Mammary epithelial cell (primary cell): ENCODE measurements at regions of chr20 and their contacts with region 1.

Region 1: GRCh38 chr20:52242237-52243230 is 51.0 kb upstream of the ZFP64 start:
- DNase-seq: no peak
- H3K4me3 ChIP-seq: no peak overlapping the region
- H3K27ac ChIP-seq: no peak overlapping the region
- H3K4me1 ChIP-seq: no peaks in the 10 kb centered on the region
- H3K27me3 ChIP-seq: no peaks in the 10 kb centered on the region
- CTCF ChIP-seq: peak; percentile 47 to 55

Region 2: GRCh38 chr20:52012079-52012478 is 230.5 kb before region 1 on chr20:
- CTCF ChIA-PET with region 1: no interaction called
- dilution Hi-C with region 1: no loop called
- in situ Hi-C with region 1: no loop called
- intact Hi-C with region 1: no loop called
- DNase-seq: no peak
- H3K4me3 ChIP-seq: no peak overlapping the region
- H3K27ac ChIP-seq: no peak overlapping the region
- H3K4me1 ChIP-seq: no peaks in the 10 kb centered on the region
- H3K27me3 ChIP-seq: no peaks in the 10 kb centered on the region
- CTCF ChIP-seq: no peak

Region 3: GRCh38 chr20:52150440-52151258 is 91.9 kb before region 1 on chr20:
- CTCF ChIA-PET with region 1: no interaction called
- dilution Hi-C with region 1: no loop called
- in situ Hi-C with region 1: no loop called
- intact Hi-C with region 1: no loop called
- DNase-seq: peak; percentile 26
- H3K4me3 ChIP-seq: no peak overlapping the region
- H3K27ac ChIP-seq: no peak overlapping the region
- H3K4me1 ChIP-seq: no peaks in the 10 kb centered on the region
- H3K27me3 ChIP-seq: no peaks in the 10 kb centered on the region
- CTCF ChIP-seq: peak; percentile 82 to 89

Region 4: GRCh38 chr20:52305858-52306257 is 63.3 kb after region 1 on chr20:
- CTCF ChIA-PET with region 1: no interaction called
- dilution Hi-C with region 1: no loop called
- in situ Hi-C with region 1: no loop called
- intact Hi-C with region 1: no loop called
- DNase-seq: no peak
- H3K4me3 ChIP-seq: no peak overlapping the region
- H3K27ac ChIP-seq: no peak overlapping the region
- H3K4me1 ChIP-seq: no peaks in the 10 kb centered on the region
- H3K27me3 ChIP-seq: no peaks in the 10 kb centered on the region
- CTCF ChIP-seq: no peak

Region 5: GRCh38 chr20:52379723-52380336 is 137.3 kb after region 1 on chr20:
- CTCF ChIA-PET with region 1: no interaction called
- dilution Hi-C with region 1: no loop called
- in situ Hi-C with region 1: no loop called
- intact Hi-C with region 1: loop called (anchors 10 kb)
- DNase-seq: no peak
- H3K4me3 ChIP-seq: no peak overlapping the region
- H3K27ac ChIP-seq: no peak overlapping the region
- H3K4me1 ChIP-seq: no peaks in the 10 kb centered on the region
- H3K27me3 ChIP-seq: no peaks in the 10 kb centered on the region
- CTCF ChIP-seq: peak; percentile 84 to 89